ENCODE measurements at regions of chr17 and their contacts with region 1.

Region 1: GRCh38 chr17:69269131-69269998 is 40.7 kb upstream of the ABCA10 start:
- DNase-seq: peak; percentile 34
- ATAC-seq: peak; percentile 10; the same call in 1 of the 3 replicates
- H3K4me3 ChIP-seq: peak overlapping the region in 1 of 3 experiments; percentile 28; a peak in 2 of 6 replicates
- H3K27ac ChIP-seq: peak overlapping the region; percentile 68
- H3K4me1 ChIP-seq: peaks cover 29% of the 10 kb centered on the region
- H3K27me3 ChIP-seq: no peaks in the 10 kb centered on the region
- CTCF ChIP-seq: no peak
- EP300 ChIP-seq: peak in 1 of 2 experiments; percentile 17; a peak in 1 of 4 replicates
- POLR2A ChIP-seq: no peak
- RAD21 ChIP-seq: no peak

Region 2: GRCh38 chr17:69327060-69327831 is 57.9 kb after region 1 on chr17 and contains the start of gene ABCA5:
- CTCF ChIA-PET with region 1: no interaction called
- POLR2A ChIA-PET with region 1: interaction called, 5 read pairs
- in situ Hi-C with region 1: no loop called
- intact Hi-C with region 1: loop called (anchors 2 kb)
- DNase-seq: peak; percentile 90
- ATAC-seq: peak; percentile 97
- H3K4me3 ChIP-seq: peak within 1 kb of the TSS; percentile 72 to 85 (median 82)
- H3K27ac ChIP-seq: peak within 1 kb of the TSS; percentile 55
- H3K4me1 ChIP-seq: peaks cover 34% of the 10 kb centered on the region
- H3K27me3 ChIP-seq: no peaks in the 10 kb centered on the region; a peak in 2 of 5 replicates
- CTCF ChIP-seq: no peak; the same call in 1 of the 2 replicates
- EP300 ChIP-seq: peak in 1 of 2 experiments; percentile 10; a peak in 2 of 4 replicates
- POLR2A ChIP-seq: peak; percentile 89 to 95
- RAD21 ChIP-seq: peak; percentile 55
- total RNA-seq, gene ABCA5: 6.0 and 10.1 TPM in 2 replicates

Measured in HepG2 (cell line).